ENCODE measurements at regions of chr1 and their contacts with region 1.

Region 1: GRCh38 chr1:100860397-100860991 is 34.1 kb downstream of the EXTL2 start:
- DNase-seq: peak in 1 of 2 donors; percentile 18
- H3K4me3 ChIP-seq: no peak overlapping the region
- H3K27ac ChIP-seq: no peak overlapping the region
- H3K4me1 ChIP-seq: no peaks in the 10 kb centered on the region
- H3K27me3 ChIP-seq: no peaks in the 10 kb centered on the region
- CTCF ChIP-seq: no peak
- EP300 ChIP-seq: no peak
- POLR2A ChIP-seq: no peak

Region 2: GRCh38 chr1:100606438-100606837 is 254.1 kb before region 1 on chr1:
- intact Hi-C with region 1: loop called (anchors 5 kb)
- DNase-seq: peak; percentile 47 to 77
- H3K4me3 ChIP-seq: no peak overlapping the region
- H3K27ac ChIP-seq: no peak overlapping the region
- H3K4me1 ChIP-seq: no peaks in the 10 kb centered on the region
- H3K27me3 ChIP-seq: no peaks in the 10 kb centered on the region
- CTCF ChIP-seq: peak in 5 of 7 experiments; percentile 32 to 71 (median 54)
- EP300 ChIP-seq: no peak
- POLR2A ChIP-seq: no peak